ENCODE measurements at regions of chr19 and their contacts with region 1.

Region 1: DNA sequence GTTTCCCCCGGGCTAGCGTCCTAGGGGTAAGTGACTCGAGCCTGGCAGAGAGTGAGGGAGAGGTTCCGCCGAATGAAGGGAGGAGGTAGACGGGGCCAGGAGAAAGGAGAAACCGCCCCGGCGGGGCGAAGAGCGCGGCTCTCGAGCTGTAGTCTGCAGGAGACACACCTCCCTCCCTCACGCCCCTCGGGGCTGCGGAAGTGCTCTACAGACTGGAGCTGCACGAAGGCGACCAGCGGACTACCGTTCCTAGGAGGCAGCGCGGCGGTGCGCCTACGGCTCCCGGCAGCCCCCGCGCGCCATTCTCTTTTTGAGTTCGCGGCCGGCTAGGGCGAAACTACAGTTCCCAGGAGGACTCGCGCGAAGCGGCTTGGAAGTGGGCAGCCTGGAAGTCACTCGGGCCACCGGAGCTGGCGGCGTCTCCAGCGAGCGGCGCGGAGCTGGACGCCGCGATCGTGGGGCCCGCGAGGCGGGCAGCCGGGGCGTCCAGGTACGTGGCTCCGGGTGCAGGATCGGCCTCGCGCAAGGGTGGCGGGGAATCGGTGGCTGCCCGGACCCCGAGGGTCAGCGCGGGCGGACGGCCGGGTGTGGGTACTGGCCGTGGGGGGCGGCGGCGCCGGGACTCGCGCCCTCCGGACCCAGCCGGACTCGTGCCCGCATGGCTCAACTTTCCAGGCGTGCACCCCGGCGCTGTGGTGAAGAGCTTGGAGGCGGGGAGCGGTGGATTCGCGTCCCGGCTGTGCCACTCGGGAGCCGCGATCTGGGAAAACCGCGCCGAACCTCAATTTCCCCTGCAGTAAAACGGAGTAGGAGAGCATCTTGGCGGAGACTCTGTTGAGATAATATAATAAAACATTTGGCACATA is at the start of gene SIPA1L3:
- DNase-seq: peak; percentile 84
- ATAC-seq: peak; percentile 92
- H3K4me3 ChIP-seq: peak within 1 kb of the TSS; percentile 74 to 82
- H3K27ac ChIP-seq: peak within 1 kb of the TSS; percentile 85
- H3K4me1 ChIP-seq: peaks cover 7 to 27% of the 10 kb centered on the region in 2 experiments; a peak in 3 of 4 replicates
- H3K27me3 ChIP-seq: no peaks in the 10 kb centered on the region
- CTCF ChIP-seq: no peak
- POLR2A ChIP-seq: peak; percentile 38
- RAD21 ChIP-seq: peak; percentile 26
- total RNA-seq, gene SIPA1L3: 41.8 TPM

Region 2: DNA sequence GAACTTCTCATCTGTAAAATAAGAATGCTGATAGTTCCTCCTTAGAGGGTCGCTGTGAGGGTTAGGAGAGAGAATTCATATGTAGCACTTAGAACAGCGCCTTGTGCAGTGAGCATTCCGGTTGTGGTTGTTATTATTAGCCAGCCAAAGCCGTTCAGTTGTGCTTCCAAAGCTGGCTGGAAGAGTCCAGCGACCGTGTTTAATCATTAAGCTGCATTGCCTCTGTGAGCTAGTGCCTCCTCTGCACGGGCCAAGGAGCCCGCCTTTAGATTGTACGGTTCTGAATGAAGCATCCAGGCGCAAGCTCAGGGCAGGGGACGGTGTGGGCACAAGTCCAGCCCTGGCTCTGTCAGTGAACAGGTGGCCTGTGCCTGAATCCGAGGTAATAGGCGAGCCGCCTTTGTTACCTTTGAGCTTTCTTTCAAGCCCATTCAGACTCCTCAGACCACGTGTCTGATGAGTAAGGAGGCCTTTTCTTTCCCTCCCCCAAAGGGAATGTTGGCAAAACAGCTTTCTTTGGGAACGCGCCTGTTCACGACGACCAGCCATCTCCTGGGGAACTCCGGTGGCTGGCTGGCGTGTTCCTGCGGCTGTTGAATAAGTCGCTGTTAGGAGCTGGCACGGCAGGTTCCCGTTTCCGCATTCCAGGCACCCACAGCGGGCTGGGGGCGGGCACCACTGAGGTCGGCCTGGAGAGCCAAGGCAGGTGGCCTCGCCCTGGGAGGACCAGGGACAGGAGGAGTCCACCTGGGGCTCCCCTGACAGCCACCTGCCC is 25.0 kb after region 1 on chr19:
- CTCF ChIA-PET with region 1: interaction called, 12 read pairs
- POLR2A ChIA-PET with region 1: interaction called, 7 read pairs
- RAD21 ChIA-PET with region 1: interaction called, 3 to 7 read pairs
- intact Hi-C with region 1: no loop called
- DNase-seq: peak; percentile 65
- ATAC-seq: peak; percentile 81
- H3K4me3 ChIP-seq: peak overlapping the region; percentile 30 to 49
- H3K27ac ChIP-seq: peak overlapping the region; percentile 88
- H3K4me1 ChIP-seq: peaks cover 61 to 87% of the 10 kb centered on the region in 2 experiments
- H3K27me3 ChIP-seq: no peaks in the 10 kb centered on the region
- CTCF ChIP-seq: no peak
- POLR2A ChIP-seq: no peak
- RAD21 ChIP-seq: peak; percentile 39; the same call in 1 of the 2 replicates

Region 3: GRCh38 chr19:37987356-37988332 is 80.5 kb after region 1 on chr19:
- CTCF ChIA-PET with region 1: interaction called, 10 read pairs
- POLR2A ChIA-PET with region 1: interaction called, 3 read pairs
- RAD21 ChIA-PET with region 1: interaction called, 3 read pairs
- intact Hi-C with region 1: loop called (anchors 2 kb)
- DNase-seq: no peak
- ATAC-seq: peak; percentile 73
- H3K4me3 ChIP-seq: no peak overlapping the region
- H3K27ac ChIP-seq: no peak overlapping the region
- H3K4me1 ChIP-seq: peaks cover 17 to 74% of the 10 kb centered on the region in 2 experiments
- H3K27me3 ChIP-seq: no peaks in the 10 kb centered on the region
- CTCF ChIP-seq: peak; percentile 51 to 64 (median 64); a peak in 5 of 6 replicates
- POLR2A ChIP-seq: no peak
- RAD21 ChIP-seq: peak; percentile 51

Region 4: DNA sequence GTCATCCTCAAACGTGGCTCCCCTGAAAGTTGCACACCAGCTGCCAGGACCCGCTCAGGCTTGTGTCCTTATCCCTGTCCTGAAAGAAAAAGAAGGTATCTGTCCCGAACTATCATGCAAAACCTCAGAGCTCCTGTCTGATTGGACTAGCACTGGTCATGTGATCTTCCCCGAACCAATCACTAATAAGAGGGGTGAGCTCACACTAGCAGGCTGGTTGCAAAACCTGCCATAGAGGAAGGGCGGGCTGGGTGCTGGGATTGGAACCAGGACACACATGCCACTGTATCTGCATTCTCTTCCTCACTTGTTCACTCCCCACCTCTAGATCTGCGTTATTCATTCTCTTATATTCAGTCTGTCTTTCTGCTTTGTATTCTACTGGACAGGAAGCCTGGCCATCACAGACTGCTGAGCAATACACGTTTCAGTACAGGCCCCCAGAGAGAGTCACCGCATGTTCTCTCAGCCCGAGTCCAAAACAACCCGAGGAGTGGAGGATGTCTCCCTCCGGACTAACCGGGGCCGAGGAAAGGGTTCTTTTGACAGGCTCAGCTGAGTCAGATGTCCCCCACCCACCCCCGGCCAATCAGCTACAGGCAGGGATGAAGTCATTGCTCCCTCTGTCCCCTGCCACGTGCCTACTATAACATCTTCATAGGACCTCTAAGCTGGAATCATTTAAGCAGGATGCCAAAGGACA is 97.6 kb after region 1 on chr19:
- CTCF ChIA-PET with region 1: interaction called, 14 read pairs
- POLR2A ChIA-PET with region 1: interaction called, 25 read pairs
- RAD21 ChIA-PET with region 1: interaction called in 1 of 2 experiments, 3 read pairs
- intact Hi-C with region 1: no loop called
- DNase-seq: peak; percentile 81
- ATAC-seq: peak; percentile 85
- H3K4me3 ChIP-seq: peak overlapping the region; percentile 42 to 51
- H3K27ac ChIP-seq: peak overlapping the region; percentile 85
- H3K4me1 ChIP-seq: peaks cover 39 to 66% of the 10 kb centered on the region in 2 experiments
- H3K27me3 ChIP-seq: no peaks in the 10 kb centered on the region
- CTCF ChIP-seq: no peak
- POLR2A ChIP-seq: peak; percentile 77
- RAD21 ChIP-seq: no peak

Region 5: GRCh38 chr19:38044267-38045111 is 137.4 kb after region 1 on chr19:
- CTCF ChIA-PET with region 1: interaction called, 11 read pairs
- POLR2A ChIA-PET with region 1: no interaction called
- RAD21 ChIA-PET with region 1: interaction called in 1 of 2 experiments, 3 read pairs
- intact Hi-C with region 1: loop called (anchors 1 kb)
- DNase-seq: no peak
- ATAC-seq: 0 out of 2 replicates have a peak, but pooled peaks have one; percentile 44
- H3K4me3 ChIP-seq: no peak overlapping the region
- H3K27ac ChIP-seq: no peak overlapping the region
- H3K4me1 ChIP-seq: peaks cover 0 to 9% of the 10 kb centered on the region in 2 experiments; a peak in 1 of 4 replicates
- H3K27me3 ChIP-seq: no peaks in the 10 kb centered on the region
- CTCF ChIP-seq: peak in 2 of 3 experiments; percentile 22 to 25; a peak in 1 of 6 replicates
- POLR2A ChIP-seq: no peak
- RAD21 ChIP-seq: peak; percentile 52

Region 6: GRCh38 chr19:38095411-38096308 is 188.6 kb after region 1 on chr19:
- CTCF ChIA-PET with region 1: interaction called, 9 read pairs
- POLR2A ChIA-PET with region 1: no interaction called
- RAD21 ChIA-PET with region 1: interaction called in 1 of 2 experiments, 3 read pairs
- intact Hi-C with region 1: loop called (anchors 1 kb)
- DNase-seq: peak; percentile 40
- ATAC-seq: peak; percentile 95
- H3K4me3 ChIP-seq: no peak overlapping the region
- H3K27ac ChIP-seq: no peak overlapping the region
- H3K4me1 ChIP-seq: no peaks in the 10 kb centered on the region
- H3K27me3 ChIP-seq: no peaks in the 10 kb centered on the region
- CTCF ChIP-seq: peak in 2 of 3 experiments; percentile 79 to 83; a peak in 4 of 6 replicates
- POLR2A ChIP-seq: no peak
- RAD21 ChIP-seq: peak; percentile 56

Region 7: GRCh38 chr19:38134540-38135149 is 227.5 kb after region 1 on chr19:
- CTCF ChIA-PET with region 1: no interaction called
- POLR2A ChIA-PET with region 1: no interaction called
- RAD21 ChIA-PET with region 1: no interaction called
- intact Hi-C with region 1: no loop called
- DNase-seq: no peak
- ATAC-seq: peak; percentile 61
- H3K4me3 ChIP-seq: no peak overlapping the region
- H3K27ac ChIP-seq: no peak overlapping the region
- H3K4me1 ChIP-seq: no peaks in the 10 kb centered on the region; a peak in 1 of 4 replicates
- H3K27me3 ChIP-seq: no peaks in the 10 kb centered on the region
- CTCF ChIP-seq: peak; percentile 15 to 77 (median 68); a peak in 4 of 6 replicates
- POLR2A ChIP-seq: no peak
- RAD21 ChIP-seq: no peak

Region 8: GRCh38 chr19:38224014-38224862 is 317.1 kb after region 1 on chr19 and contains the start of gene DPF1:
- CTCF ChIA-PET with region 1: interaction called, 35 read pairs
- POLR2A ChIA-PET with region 1: no interaction called
- RAD21 ChIA-PET with region 1: interaction called in 1 of 2 experiments, 3 read pairs
- intact Hi-C with region 1: loop called (anchors 1 kb)
- DNase-seq: peak; percentile 54
- ATAC-seq: peak; percentile 91
- H3K4me3 ChIP-seq: peak within 1 kb of the TSS; percentile 60 to 62
- H3K27ac ChIP-seq: peak within 1 kb of the TSS; percentile 8; the same call in 1 of the 2 replicates
- H3K4me1 ChIP-seq: peaks cover 10 to 44% of the 10 kb centered on the region in 2 experiments; a peak in 3 of 4 replicates
- H3K27me3 ChIP-seq: no peaks in the 10 kb centered on the region
- CTCF ChIP-seq: peak; percentile 31 to 53 (median 43); a peak in 5 of 6 replicates
- POLR2A ChIP-seq: no peak
- RAD21 ChIP-seq: no peak; the same call in 1 of the 2 replicates
- total RNA-seq, gene DPF1: 9.7 TPM

Measured in HCT116 (cell line).